Endothelial cell of umbilical vein (primary cell): ENCODE measurements at regions of chr21 and their contacts with region 1.

Region 1: GRCh38 chr21:16318646-16319300 is 589.0 kb downstream of the USP25 start:
- DNase-seq: no peak
- H3K4me3 ChIP-seq: no peak overlapping the region
- H3K27ac ChIP-seq: no peak overlapping the region
- H3K4me1 ChIP-seq: no peaks in the 10 kb centered on the region
- H3K27me3 ChIP-seq: no peaks in the 10 kb centered on the region
- CTCF ChIP-seq: no peak
- POLR2A ChIP-seq: no peak

Region 2: GRCh38 chr21:15992171-15992570 is 326.6 kb before region 1 on chr21:
- CTCF ChIA-PET with region 1: no interaction called
- POLR2A ChIA-PET with region 1: interaction called, 15 read pairs
- dilution Hi-C with region 1: no loop called
- intact Hi-C with region 1: no loop called
- DNase-seq: peak; percentile 97
- H3K4me3 ChIP-seq: no peak overlapping the region
- H3K27ac ChIP-seq: peak overlapping the region; percentile 60
- H3K4me1 ChIP-seq: peaks cover 19% of the 10 kb centered on the region
- H3K27me3 ChIP-seq: no peaks in the 10 kb centered on the region
- CTCF ChIP-seq: no peak
- POLR2A ChIP-seq: peak; percentile 73

Region 3: DNA sequence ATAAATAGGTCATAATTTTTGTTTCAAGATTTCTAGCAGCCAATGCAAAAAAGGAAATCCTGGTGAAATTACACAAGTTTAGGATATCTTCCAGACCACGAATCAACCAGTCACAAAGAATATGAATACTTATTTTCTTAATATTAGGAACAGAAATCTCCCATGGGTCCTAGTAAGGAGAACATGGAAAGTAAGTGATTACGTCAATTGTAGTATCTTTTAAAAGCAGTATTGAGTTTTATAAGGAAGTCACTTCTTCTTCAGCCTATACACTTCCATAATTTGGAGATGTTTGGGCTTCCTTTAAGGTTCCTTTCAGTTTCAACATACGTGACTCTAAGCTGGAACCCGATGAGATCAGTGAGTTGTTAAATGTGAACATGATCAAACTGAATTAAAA is 54.5 kb before region 1 on chr21:
- CTCF ChIA-PET with region 1: no interaction called
- POLR2A ChIA-PET with region 1: no interaction called
- dilution Hi-C with region 1: no loop called
- intact Hi-C with region 1: no loop called
- DNase-seq: peak; percentile 22
- H3K4me3 ChIP-seq: no peak overlapping the region
- H3K27ac ChIP-seq: no peak overlapping the region
- H3K4me1 ChIP-seq: no peaks in the 10 kb centered on the region
- H3K27me3 ChIP-seq: no peaks in the 10 kb centered on the region
- CTCF ChIP-seq: no peak
- POLR2A ChIP-seq: no peak